Activated CD8-positive, alpha-beta memory T cell treated with anti-CD3 and anti-CD28 coated beads, Interleukin-2, amount 10 ng/mL, durations not matched to agents 7 days and 5 days (primary cell): ENCODE measurements at regions of chr3 and their contacts with region 1.

Region 1: GRCh38 chr3:12841149-12841970 is at the start of gene RPL32:
- DNase-seq: peak; percentile 91
- ATAC-seq: peak; percentile 91
- H3K4me3 Mint-ChIP-seq: peak within 1 kb of the TSS; percentile 98
- H3K27ac Mint-ChIP-seq: peak within 1 kb of the TSS; percentile 98
- H3K4me1 Mint-ChIP-seq: peaks cover 48% of the 10 kb centered on the region
- H3K27me3 Mint-ChIP-seq: no peaks in the 10 kb centered on the region
- total RNA-seq, gene RPL32: 1,759 to 1,893 TPM

Region 2: GRCh38 chr3:12601072-12601471 is 240.3 kb before region 1 on chr3:
- CTCF ChIA-PET with region 1: no interaction called
- DNase-seq: no peak
- ATAC-seq: no peak
- H3K4me3 Mint-ChIP-seq: no peak overlapping the region
- H3K27ac Mint-ChIP-seq: no peak overlapping the region
- H3K4me1 Mint-ChIP-seq: no peaks in the 10 kb centered on the region
- H3K27me3 Mint-ChIP-seq: no peaks in the 10 kb centered on the region

Region 3: DNA sequence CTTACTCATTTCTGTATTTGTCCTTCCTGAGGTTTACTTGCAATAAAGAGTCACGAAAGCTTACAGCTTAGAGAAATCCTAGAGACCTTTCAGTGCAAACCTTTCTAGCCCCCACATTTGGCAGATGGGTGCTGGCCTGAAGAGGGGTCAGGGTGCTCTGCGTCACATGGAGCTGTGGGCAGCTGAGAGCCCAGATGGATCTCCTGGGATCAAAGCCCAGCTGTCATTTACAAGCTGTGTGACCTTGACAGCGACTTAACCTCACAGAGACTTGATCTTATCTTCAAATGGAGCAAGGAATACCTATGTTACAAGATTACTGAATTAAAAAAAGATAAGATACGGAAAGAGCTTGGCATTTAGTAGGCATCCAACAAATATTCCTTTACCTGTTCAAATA is 153.4 kb before region 1 on chr3:
- CTCF ChIA-PET with region 1: no interaction called
- DNase-seq: no peak
- ATAC-seq: no peak
- H3K4me3 Mint-ChIP-seq: no peak overlapping the region
- H3K27ac Mint-ChIP-seq: no peak overlapping the region
- H3K4me1 Mint-ChIP-seq: no peaks in the 10 kb centered on the region
- H3K27me3 Mint-ChIP-seq: peaks cover 6% of the 10 kb centered on the region

Region 4: DNA sequence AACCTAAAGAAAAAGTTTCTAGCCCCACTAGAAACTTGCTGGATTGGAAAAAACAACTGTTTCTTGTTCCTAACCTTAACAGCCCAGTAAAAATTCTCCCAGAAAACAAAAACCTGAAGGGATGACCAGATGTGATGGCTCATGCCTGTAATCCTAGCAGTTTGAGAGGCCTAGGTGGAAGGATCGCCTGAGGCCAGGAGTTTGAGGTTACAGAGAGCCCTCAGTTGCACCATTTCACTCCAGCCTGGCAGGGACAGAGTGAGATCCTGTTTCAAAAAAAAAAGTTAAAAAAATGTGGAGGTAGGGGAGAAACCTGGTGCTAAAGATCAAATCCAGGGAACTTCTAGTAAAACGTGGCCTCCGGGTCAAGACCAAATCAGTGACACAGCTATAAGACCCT is 138.8 kb before region 1 on chr3:
- CTCF ChIA-PET with region 1: no interaction called
- DNase-seq: no peak
- ATAC-seq: no peak
- H3K4me3 Mint-ChIP-seq: no peak overlapping the region
- H3K27ac Mint-ChIP-seq: no peak overlapping the region
- H3K4me1 Mint-ChIP-seq: no peaks in the 10 kb centered on the region
- H3K27me3 Mint-ChIP-seq: peaks cover 12% of the 10 kb centered on the region

Region 5: GRCh38 chr3:12782172-12782815 is 59.1 kb before region 1 on chr3:
- CTCF ChIA-PET with region 1: interaction called, 16 read pairs
- DNase-seq: no peak
- ATAC-seq: no peak
- H3K4me3 Mint-ChIP-seq: no peak overlapping the region
- H3K27ac Mint-ChIP-seq: no peak overlapping the region
- H3K4me1 Mint-ChIP-seq: no peaks in the 10 kb centered on the region
- H3K27me3 Mint-ChIP-seq: peaks cover 51% of the 10 kb centered on the region

Region 6: GRCh38 chr3:12810013-12810780 is 31.2 kb before region 1 on chr3:
- CTCF ChIA-PET with region 1: interaction called, 14 read pairs
- DNase-seq: peak; percentile 96
- ATAC-seq: peak; percentile 99
- H3K4me3 Mint-ChIP-seq: peak overlapping the region; percentile 54
- H3K27ac Mint-ChIP-seq: peak overlapping the region; percentile 67
- H3K4me1 Mint-ChIP-seq: peaks cover 5% of the 10 kb centered on the region
- H3K27me3 Mint-ChIP-seq: peaks cover 11% of the 10 kb centered on the region

Region 7: DNA sequence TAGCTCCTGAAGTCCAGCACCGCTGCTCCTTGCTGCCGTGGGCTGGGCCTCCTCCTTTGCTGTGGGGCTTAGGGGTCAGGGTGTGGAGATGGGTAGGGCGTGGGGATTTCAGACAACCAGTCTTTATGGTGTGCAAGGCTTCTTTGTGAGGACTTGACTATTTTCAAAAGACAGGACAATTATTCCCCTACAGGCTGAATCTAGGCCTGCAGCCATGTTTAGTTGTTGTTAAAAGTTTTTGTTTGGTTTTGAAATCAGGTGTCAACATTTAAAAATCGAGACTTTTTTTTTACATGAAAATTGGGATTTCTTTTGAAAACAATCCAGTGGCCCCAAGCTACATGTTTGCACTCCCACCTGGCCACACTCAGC is 10.6 kb before region 1 on chr3:
- CTCF ChIA-PET with region 1: interaction called, 21 read pairs
- DNase-seq: no peak
- ATAC-seq: no peak
- H3K4me3 Mint-ChIP-seq: no peak overlapping the region
- H3K27ac Mint-ChIP-seq: no peak overlapping the region
- H3K4me1 Mint-ChIP-seq: peaks cover 2% of the 10 kb centered on the region
- H3K27me3 Mint-ChIP-seq: no peaks in the 10 kb centered on the region

Region 8: DNA sequence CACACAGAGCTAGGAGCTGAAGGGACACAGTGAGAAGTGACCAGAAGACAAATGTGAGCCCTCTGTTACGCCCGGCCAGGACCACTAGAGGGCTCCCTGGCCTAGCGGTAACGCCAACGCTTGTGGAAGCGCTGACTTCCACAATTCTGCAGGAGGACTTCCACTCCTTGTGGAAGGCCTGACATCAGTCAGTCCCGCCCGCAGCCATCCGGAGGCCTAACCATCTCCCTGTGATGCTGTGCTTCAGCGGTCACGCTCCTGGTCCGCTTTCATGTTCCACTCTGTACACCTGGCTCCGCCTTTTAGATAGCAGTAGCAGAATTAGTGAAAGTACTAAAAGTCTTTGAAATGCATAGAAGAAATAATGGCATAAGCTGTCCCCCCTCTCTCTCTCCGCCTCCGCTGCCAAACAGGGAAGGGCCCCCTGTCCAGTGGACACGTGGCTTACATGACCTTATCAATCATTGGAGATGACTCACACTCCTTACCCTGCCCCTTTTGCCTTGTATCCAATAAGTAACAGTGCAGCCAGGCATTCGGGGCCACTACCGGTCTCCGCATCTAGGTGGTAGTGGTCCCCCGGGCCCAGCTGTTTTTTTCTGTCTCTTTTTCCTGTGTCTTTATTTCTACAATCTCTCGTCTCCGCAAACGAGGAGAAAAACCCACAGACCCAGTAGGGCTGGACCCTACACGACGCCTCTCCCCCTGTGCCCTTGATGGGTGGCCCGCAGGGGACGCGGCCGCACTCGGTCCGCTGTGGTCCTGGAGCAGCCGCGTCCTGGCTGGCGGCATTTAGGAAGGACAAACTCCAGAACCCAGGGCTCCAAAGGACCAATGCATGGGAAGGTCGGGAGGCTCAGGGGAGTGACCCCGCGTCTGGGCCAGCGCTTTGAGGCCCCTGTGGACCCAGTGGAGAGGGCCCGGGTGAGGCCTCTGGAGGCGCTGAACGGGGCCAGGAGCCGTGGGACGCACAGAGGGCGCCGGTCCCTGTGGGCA is 27.0 kb after region 1 on chr3:
- CTCF ChIA-PET with region 1: interaction called, 10 read pairs
- DNase-seq: peak; percentile 73
- ATAC-seq: peak; percentile 72
- H3K4me3 Mint-ChIP-seq: peak overlapping the region; percentile 62
- H3K27ac Mint-ChIP-seq: no peak overlapping the region
- H3K4me1 Mint-ChIP-seq: peaks cover 21% of the 10 kb centered on the region
- H3K27me3 Mint-ChIP-seq: peaks cover 18% of the 10 kb centered on the region

Region 9: DNA sequence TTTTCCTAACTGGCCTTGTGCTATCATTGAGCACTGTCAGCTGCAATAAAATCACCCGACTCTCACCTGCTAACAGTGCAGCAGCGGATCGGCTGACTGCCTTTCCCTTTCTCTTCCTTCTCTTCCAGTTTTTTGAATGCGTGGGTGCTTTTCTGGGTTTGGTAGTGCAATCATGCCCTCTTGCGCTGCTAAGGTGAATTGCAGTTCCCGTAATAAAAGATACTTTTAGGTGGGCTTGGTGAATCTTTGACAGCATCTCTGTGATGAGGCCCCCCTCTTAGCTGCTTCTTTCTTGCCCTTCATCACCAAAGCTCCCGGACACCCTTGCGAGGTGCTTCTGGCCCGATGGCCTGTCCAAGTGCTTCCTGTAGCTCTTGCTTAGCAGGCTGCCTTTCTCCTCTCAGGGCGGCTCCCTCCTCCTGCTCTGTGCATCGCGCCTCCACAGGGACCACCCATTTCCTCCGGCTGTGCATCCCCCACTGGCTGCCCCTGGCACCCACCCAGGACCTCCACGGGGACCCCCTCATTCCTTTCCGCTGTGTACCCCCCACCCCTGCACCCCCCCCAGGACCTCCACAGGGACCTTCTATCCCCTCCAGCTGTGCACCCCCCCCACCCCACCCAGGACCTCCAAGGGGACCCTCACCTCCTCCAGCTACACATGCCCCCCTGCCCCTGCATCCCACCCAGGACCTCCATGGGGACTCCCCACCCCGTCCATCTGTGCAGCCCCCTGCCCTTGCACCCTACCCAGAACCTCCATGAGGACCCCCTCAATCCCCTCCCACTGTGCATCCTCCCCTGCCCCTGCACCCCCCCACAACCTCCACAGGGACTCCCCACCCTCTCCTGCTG is 50.9 kb after region 1 on chr3:
- CTCF ChIA-PET with region 1: interaction called, 16 read pairs
- DNase-seq: peak; percentile 56
- ATAC-seq: peak; percentile 59
- H3K4me3 Mint-ChIP-seq: no peak overlapping the region
- H3K27ac Mint-ChIP-seq: no peak overlapping the region
- H3K4me1 Mint-ChIP-seq: peaks cover 14% of the 10 kb centered on the region
- H3K27me3 Mint-ChIP-seq: peaks cover 45% of the 10 kb centered on the region

Region 10: DNA sequence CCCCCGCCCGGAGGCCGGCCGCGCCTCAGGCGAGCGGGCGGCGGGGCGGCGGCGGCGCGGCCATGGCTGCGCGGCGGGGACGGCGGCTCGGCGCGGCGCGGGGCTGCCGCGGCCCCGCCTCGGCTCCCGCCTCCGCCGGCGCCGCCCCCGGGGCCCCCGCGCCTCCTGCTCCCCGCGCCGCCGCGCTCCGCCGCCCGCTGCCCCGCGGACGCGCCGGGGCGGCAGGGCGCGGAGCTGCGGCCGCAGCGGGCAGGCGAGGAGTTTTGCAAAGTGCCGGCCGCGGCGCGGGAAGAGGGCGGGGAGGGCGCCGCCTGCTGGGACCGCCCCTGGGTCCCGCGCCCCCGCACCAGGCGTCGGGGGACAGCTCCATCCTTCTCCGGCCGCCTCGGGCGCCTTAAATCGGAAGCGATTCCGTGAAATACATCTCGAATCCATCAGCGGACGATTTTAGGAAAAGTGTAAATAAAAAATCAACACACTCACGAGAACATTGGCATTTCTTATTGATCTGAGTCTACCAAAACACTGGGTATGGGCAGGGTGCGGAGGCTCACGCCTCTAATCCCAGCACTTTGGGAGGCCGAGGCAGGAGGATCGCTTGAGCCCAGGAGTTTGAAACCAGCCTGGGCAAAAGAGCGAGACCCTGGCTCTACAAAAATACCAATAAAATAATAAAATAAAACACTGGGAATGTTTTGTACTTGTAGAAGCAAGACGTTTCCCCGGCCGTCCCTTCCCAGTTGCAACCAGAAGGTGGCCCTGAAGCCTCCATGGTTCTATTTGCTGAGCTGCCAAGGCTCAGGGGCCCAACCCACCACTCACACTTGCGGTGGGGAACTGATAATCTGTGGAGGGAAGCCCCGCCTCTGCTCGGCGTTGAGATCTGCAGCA is 441.9 kb after region 1 on chr3:
- CTCF ChIA-PET with region 1: no interaction called
- DNase-seq: no peak
- ATAC-seq: peak; percentile 48
- H3K4me3 Mint-ChIP-seq: peak overlapping the region; percentile 50
- H3K27ac Mint-ChIP-seq: no peak overlapping the region
- H3K4me1 Mint-ChIP-seq: peaks cover 8% of the 10 kb centered on the region
- H3K27me3 Mint-ChIP-seq: peaks cover 64% of the 10 kb centered on the region